CD8-positive, alpha-beta T cell (primary cell): ENCODE measurements at regions of chr12 and their contacts with region 1.

Region 1: DNA sequence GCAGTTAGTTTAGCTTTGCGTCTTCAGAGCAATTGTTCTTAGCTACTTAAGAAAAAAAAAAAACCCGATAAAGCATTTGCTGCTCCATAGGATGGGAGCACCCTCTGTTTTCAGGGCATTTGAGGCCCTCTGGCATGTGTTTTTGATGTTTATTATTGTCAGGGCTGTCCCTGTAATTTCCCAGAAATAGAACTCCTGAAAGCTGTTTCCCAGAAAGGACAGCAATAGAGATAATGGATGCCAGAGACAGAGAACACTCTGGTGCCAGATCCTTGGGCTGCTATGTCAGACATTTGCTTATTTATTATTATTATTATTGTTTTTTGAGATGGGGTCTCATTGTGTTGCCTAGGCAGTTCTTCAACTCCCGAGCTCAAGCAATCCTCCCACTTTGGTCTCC is 201.3 kb downstream of the ALG10 start:
- DNase-seq: no peak
- ATAC-seq: no peak
- H3K4me3 ChIP-seq: no peak overlapping the region
- H3K4me3 Mint-ChIP-seq: no peak overlapping the region
- H3K27ac ChIP-seq: no peak overlapping the region
- H3K27ac Mint-ChIP-seq: no peak overlapping the region
- H3K4me1 ChIP-seq: no peaks in the 10 kb centered on the region
- H3K4me1 Mint-ChIP-seq: peaks cover under 1% of the 10 kb centered on the region
- H3K27me3 ChIP-seq: peaks cover 0 to 5% of the 10 kb centered on the region in 2 experiments
- H3K27me3 Mint-ChIP-seq: peaks cover 5% of the 10 kb centered on the region
- CTCF ChIP-seq: no peak

Region 2: DNA sequence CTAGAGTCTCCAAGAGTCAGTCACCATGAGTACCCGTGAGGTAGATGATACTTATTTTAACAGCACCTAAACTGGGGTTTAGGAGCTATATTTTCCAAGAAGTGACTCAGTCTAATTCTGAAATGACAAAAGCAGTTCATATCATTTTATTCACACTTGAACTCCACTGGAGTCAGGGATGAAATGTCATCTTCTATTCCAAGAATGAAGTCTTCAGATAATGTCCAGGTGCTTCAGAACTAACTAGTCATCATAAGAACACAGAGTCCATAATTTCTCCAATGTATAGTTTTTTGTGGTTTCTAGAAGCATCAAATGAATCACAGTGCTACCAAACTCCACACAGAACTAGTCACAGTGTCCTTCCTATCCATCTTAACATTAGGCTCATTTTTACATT is 1531.3 kb before region 1 on chr12:
- CTCF ChIA-PET with region 1: no interaction called
- POLR2A ChIA-PET with region 1: no interaction called
- intact Hi-C with region 1: no loop called
- DNase-seq: no peak
- ATAC-seq: no peak
- H3K4me3 ChIP-seq: no peak overlapping the region
- H3K4me3 Mint-ChIP-seq: no peak overlapping the region
- H3K27ac ChIP-seq: no peak overlapping the region
- H3K27ac Mint-ChIP-seq: no peak overlapping the region
- H3K4me1 ChIP-seq: no peaks in the 10 kb centered on the region
- H3K4me1 Mint-ChIP-seq: peaks cover 49% of the 10 kb centered on the region
- H3K27me3 ChIP-seq: no peaks in the 10 kb centered on the region
- H3K27me3 Mint-ChIP-seq: no peaks in the 10 kb centered on the region
- CTCF ChIP-seq: no peak

Region 3: GRCh38 chr12:34033628-34034282 is 189.9 kb before region 1 on chr12:
- CTCF ChIA-PET with region 1: no interaction called
- POLR2A ChIA-PET with region 1: no interaction called
- intact Hi-C with region 1: loop called (anchors 5 kb)
- DNase-seq: peak in 2 of 9 experiments; percentile 48 to 62
- ATAC-seq: no peak
- H3K4me3 ChIP-seq: no peak overlapping the region
- H3K4me3 Mint-ChIP-seq: no peak overlapping the region
- H3K27ac ChIP-seq: no peak overlapping the region
- H3K27ac Mint-ChIP-seq: no peak overlapping the region
- H3K4me1 ChIP-seq: no peaks in the 10 kb centered on the region
- H3K4me1 Mint-ChIP-seq: no peaks in the 10 kb centered on the region
- H3K27me3 ChIP-seq: no peaks in the 10 kb centered on the region
- H3K27me3 Mint-ChIP-seq: no peaks in the 10 kb centered on the region
- CTCF ChIP-seq: peak; percentile 77

Region 4: GRCh38 chr12:34186492-34186891 is 37.1 kb before region 1 on chr12:
- CTCF ChIA-PET with region 1: no interaction called
- POLR2A ChIA-PET with region 1: no interaction called
- intact Hi-C with region 1: no loop called
- DNase-seq: no peak
- ATAC-seq: no peak
- H3K4me3 ChIP-seq: no peak overlapping the region
- H3K4me3 Mint-ChIP-seq: no peak overlapping the region
- H3K27ac ChIP-seq: no peak overlapping the region
- H3K27ac Mint-ChIP-seq: no peak overlapping the region
- H3K4me1 ChIP-seq: no peaks in the 10 kb centered on the region
- H3K4me1 Mint-ChIP-seq: peaks cover 3% of the 10 kb centered on the region
- H3K27me3 ChIP-seq: no peaks in the 10 kb centered on the region
- H3K27me3 Mint-ChIP-seq: no peaks in the 10 kb centered on the region
- CTCF ChIP-seq: no peak